ENCODE measurements at regions of chr19 and their contacts with region 1.

Region 1: GRCh38 chr19:16330368-16330801 is 5.8 kb downstream of the KLF2 start:
- DNase-seq: peak; percentile 93 to 99 (median 96)
- H3K4me3 ChIP-seq: peak overlapping the region in 1 of 2 donors; percentile 11
- H3K4me3 Mint-ChIP-seq: peak overlapping the region; percentile 97 to 100 (median 99)
- H3K27ac ChIP-seq: peak overlapping the region; percentile 83
- H3K27ac Mint-ChIP-seq: peak overlapping the region; percentile 92 to 99 (median 98)
- H3K4me1 ChIP-seq: peaks cover 38% of the 10 kb centered on the region
- H3K4me1 Mint-ChIP-seq: peaks cover 25 to 77% (median 37%) of the 10 kb centered on the region in 4 donors
- H3K27me3 ChIP-seq: no peaks in the 10 kb centered on the region
- H3K27me3 Mint-ChIP-seq: peaks cover 0 to 7% of the 10 kb centered on the region in 2 donors

Region 2: DNA sequence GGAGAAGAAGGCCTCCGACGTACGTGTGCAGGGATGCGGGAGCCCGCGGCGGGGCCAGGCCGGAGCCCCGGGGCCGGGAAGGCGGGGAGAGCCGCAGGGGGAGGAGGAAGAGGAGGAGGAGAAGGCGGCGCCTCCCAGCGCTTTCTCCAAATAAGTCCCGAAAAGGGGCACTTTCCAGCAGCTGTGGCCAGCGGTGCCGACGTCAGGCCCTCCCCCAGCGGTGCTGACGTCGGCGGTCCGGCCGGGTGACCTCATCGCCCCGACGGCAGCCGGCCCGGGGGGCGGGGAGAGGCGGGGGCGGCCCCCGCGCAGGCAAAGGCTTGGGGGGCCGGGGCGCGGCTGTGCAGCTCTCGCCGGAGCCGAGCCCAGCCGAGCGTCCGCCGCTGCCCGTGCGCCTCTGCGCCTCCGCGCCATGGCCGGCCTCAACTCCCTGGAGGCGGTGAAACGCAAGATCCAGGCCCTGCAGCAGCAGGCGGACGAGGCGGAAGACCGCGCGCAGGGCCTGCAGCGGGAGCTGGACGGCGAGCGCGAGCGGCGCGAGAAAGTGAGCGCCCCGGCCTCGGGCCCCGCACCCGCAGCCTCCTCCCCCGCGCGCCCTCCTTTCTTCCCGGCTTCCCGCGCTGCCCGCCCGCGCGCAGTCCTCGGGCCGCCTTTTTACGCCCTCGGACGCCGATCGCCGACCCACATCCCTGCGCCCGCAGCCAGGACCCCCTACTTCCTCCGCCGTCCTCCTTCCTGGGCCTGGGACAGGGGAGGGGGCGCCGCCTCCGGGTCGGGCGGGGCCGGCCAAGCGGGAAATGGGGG is 254.0 kb before region 1 on chr19 and contains the start of gene TPM4:
- CTCF ChIA-PET with region 1: no interaction called
- POLR2A ChIA-PET with region 1: interaction called, 29 read pairs
- intact Hi-C with region 1: loop called (anchors 5 kb)
- DNase-seq: peak; percentile 74 to 89 (median 76)
- H3K4me3 ChIP-seq: peak within 1 kb of the TSS; percentile 55 to 85
- H3K4me3 Mint-ChIP-seq: peak within 1 kb of the TSS; percentile 83 to 92 (median 91)
- H3K27ac ChIP-seq: peak within 1 kb of the TSS; percentile 91
- H3K27ac Mint-ChIP-seq: peak within 1 kb of the TSS; percentile 91 to 100 (median 99)
- H3K4me1 ChIP-seq: peaks cover 78% of the 10 kb centered on the region
- H3K4me1 Mint-ChIP-seq: peaks cover 42 to 83% (median 59%) of the 10 kb centered on the region in 4 donors
- H3K27me3 ChIP-seq: no peaks in the 10 kb centered on the region
- H3K27me3 Mint-ChIP-seq: no peaks in the 10 kb centered on the region
- total RNA-seq, gene TPM4: 94.7 to 96.8 TPM

Region 3: GRCh38 chr19:16247353-16248182 is 82.8 kb before region 1 on chr19:
- CTCF ChIA-PET with region 1: interaction called, 45 read pairs
- POLR2A ChIA-PET with region 1: interaction called, 199 read pairs
- intact Hi-C with region 1: no loop called
- DNase-seq: peak; percentile 71 to 80 (median 73)
- H3K4me3 ChIP-seq: no peak overlapping the region
- H3K4me3 Mint-ChIP-seq: peak overlapping the region in 6 of 8 donors; percentile 23 to 66 (median 54)
- H3K27ac ChIP-seq: no peak overlapping the region
- H3K27ac Mint-ChIP-seq: peak overlapping the region; percentile 61 to 84 (median 67)
- H3K4me1 ChIP-seq: peaks cover 17% of the 10 kb centered on the region
- H3K4me1 Mint-ChIP-seq: peaks cover 11 to 26% (median 21%) of the 10 kb centered on the region in 4 donors
- H3K27me3 ChIP-seq: no peaks in the 10 kb centered on the region
- H3K27me3 Mint-ChIP-seq: peaks cover 0 to 3% of the 10 kb centered on the region in 2 donors

Region 4: DNA sequence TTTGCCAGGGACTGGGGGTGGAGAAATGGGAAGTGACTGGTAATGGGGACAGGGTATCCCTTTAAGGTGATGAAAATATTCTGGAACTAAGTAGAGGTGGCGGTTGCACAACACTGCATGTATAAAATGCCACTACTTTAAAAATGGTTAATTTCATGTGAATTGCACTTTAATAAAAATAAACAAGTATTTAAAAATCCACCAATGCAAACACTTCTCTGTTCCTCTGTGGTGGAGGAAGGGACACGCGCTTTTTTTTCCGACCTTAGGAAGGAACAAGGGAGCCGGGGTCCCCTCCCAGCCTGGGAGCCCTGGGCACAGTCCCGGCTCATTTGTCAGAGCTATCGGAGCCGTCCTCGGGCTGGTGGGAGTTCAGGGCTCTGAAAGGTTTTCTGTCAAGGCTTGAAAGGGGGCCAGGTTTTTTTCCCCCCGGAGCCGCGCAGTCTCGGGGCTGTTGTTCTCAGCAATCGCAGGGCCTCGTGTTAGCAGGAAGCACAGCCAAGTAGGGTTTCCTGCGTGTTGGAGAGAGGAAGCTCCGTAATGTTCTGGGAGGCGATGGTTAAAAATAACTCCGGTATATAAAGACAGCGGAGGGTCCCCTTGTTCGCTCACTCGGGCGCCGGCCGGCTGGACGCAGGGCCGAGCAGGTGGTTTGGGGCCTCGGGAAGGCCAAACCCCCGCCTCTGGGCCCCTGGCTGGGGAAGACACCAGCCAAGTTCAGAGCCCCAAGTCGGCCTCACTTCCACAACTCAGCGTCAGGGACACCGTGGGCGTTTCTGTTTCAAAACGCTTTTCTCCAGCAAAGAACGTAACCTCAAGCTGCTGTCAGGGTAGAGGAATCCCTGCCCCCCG is 46.9 kb before region 1 on chr19:
- CTCF ChIA-PET with region 1: no interaction called
- POLR2A ChIA-PET with region 1: interaction called, 50 read pairs
- intact Hi-C with region 1: no loop called
- DNase-seq: peak; percentile 42 to 60 (median 51)
- H3K4me3 ChIP-seq: peak overlapping the region; percentile 13 to 46
- H3K4me3 Mint-ChIP-seq: peak overlapping the region; percentile 51 to 84 (median 74)
- H3K27ac ChIP-seq: peak overlapping the region; percentile 31
- H3K27ac Mint-ChIP-seq: peak overlapping the region; percentile 57 to 94 (median 89)
- H3K4me1 ChIP-seq: peaks cover 23% of the 10 kb centered on the region
- H3K4me1 Mint-ChIP-seq: peaks cover 14 to 43% (median 23%) of the 10 kb centered on the region in 4 donors
- H3K27me3 ChIP-seq: no peaks in the 10 kb centered on the region
- H3K27me3 Mint-ChIP-seq: peaks cover 0 to 4% of the 10 kb centered on the region in 2 donors

Region 5: DNA sequence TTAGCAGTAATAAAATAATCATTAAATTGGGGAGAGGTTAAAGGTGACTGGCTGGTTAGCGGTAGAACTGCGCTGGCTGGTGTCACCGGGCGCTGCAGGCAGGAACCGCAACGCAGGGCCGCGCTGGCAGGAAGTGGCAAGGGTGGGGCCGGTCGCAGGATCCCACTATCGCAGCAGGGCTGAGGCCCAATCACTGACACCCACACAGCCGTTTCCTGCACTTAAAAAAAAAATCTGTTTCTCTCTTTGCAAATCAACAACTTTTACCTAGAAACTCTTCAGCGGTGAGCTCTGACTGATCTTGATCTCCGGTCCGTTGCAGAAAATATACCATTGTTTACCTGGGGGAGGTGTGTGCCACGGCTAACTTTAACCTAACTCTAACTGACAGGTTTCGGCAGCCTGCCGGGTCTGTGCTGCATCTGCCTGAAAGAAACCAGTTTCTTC is 41.2 kb after region 1 on chr19:
- CTCF ChIA-PET with region 1: interaction called, 143 read pairs
- POLR2A ChIA-PET with region 1: interaction called, 6,478 read pairs
- intact Hi-C with region 1: loop called (anchors 1 kb)
- DNase-seq: peak; percentile 95 to 97 (median 95)
- H3K4me3 ChIP-seq: peak overlapping the region in 1 of 2 donors; percentile 47
- H3K4me3 Mint-ChIP-seq: no peak overlapping the region
- H3K27ac ChIP-seq: peak overlapping the region; percentile 89
- H3K27ac Mint-ChIP-seq: no peak overlapping the region
- H3K4me1 ChIP-seq: peaks cover 98% of the 10 kb centered on the region
- H3K4me1 Mint-ChIP-seq: peaks cover 0 to 60% (median 31%) of the 10 kb centered on the region in 4 donors
- H3K27me3 ChIP-seq: no peaks in the 10 kb centered on the region
- H3K27me3 Mint-ChIP-seq: no peaks in the 10 kb centered on the region

Region 6: DNA sequence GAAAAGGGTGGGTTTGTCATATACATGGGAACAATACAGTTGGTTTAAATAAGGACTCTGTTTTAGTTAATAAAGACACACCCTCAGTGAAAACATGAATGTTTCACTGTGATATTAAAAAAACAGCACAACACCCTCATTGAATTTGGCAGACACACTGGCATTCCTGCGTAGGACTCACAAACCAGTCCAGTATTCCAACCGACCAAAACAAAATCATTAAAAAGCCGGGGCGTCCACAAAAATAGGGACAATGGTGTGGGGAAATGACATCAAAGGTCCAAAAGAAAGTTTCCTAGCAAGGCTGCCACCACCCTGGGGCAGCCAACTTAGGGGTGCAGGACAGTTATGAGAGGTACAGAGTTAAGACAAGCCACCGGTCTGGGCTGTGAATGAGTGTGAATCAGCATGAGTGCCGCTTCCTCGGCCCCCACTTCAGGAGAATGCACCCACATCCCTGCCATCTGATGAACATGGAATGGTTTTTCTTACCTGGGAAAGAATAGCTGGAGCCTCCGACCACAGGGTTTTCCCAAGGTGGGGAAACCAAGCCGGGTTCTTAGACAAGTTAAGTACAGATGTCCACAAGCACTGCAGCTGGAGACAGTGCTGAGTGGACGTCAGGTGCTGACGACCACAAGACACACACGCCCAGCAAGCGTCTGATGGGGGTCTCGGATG is 67.5 kb after region 1 on chr19:
- CTCF ChIA-PET with region 1: no interaction called
- POLR2A ChIA-PET with region 1: interaction called, 22 read pairs
- intact Hi-C with region 1: no loop called
- DNase-seq: no peak
- H3K4me3 ChIP-seq: no peak overlapping the region
- H3K4me3 Mint-ChIP-seq: no peak overlapping the region
- H3K27ac ChIP-seq: no peak overlapping the region
- H3K27ac Mint-ChIP-seq: peak overlapping the region in 6 of 7 donors; percentile 16 to 93 (median 84)
- H3K4me1 ChIP-seq: peaks cover 18% of the 10 kb centered on the region
- H3K4me1 Mint-ChIP-seq: peaks cover 6 to 31% (median 12%) of the 10 kb centered on the region in 4 donors
- H3K27me3 ChIP-seq: no peaks in the 10 kb centered on the region
- H3K27me3 Mint-ChIP-seq: no peaks in the 10 kb centered on the region

Measured in CD4-positive, alpha-beta memory T cell (primary cell).